Ovary (tissue), 10 donors: ENCODE measurements at regions of chr17 and their contacts with region 1.

Region 1: GRCh38 chr17:77096570-77097214 is 44.1 kb upstream of the SEC14L1 start:
- DNase-seq: peak in 1 of 5 donors; percentile 48
- H3K4me3 ChIP-seq: no peak overlapping the region
- H3K27ac ChIP-seq: peak overlapping the region; percentile 4 to 59
- H3K4me1 ChIP-seq: peaks cover 12% of the 10 kb centered on the region
- H3K27me3 ChIP-seq: no peaks in the 10 kb centered on the region
- CTCF ChIP-seq: peak; percentile 63 to 85 (median 75)
- EP300 ChIP-seq: no peak
- POLR2A ChIP-seq: no peak

Region 2: DNA sequence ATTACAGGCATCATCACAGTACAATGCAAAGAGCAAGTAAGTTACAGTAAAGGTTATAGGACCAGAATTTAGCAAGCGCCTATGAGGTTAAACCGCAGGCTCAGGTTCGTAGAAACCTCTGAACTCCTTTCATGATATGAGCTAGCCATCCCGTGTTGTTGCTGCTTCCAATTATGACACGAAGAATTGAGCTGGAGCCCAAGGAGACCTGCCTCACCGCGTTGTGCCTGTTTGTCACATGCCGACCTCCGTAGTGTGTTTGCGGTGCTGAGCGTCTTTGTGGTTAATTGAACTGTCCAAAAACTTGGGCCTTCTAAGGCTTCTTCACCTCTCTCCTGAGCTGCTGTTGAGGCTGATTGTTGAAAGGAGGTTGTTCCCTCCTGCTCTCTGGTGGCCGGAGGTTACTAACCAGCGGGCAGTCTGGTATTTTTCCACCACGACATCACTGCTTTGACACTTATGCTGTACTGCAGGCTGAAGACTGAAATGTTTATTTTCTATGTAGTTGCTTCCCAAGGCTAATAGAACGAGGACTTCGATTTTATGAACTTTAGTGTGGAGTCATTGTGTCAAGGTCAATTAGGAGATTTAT is 111.6 kb after region 1 on chr17:
- intact Hi-C with region 1: loop called in 2 of 4 experiments (anchors 2 to 5 kb)
- DNase-seq: peak in 3 of 5 donors; percentile 21 to 45 (median 44)
- H3K4me3 ChIP-seq: no peak overlapping the region
- H3K27ac ChIP-seq: no peak overlapping the region
- H3K4me1 ChIP-seq: no peaks in the 10 kb centered on the region
- H3K27me3 ChIP-seq: no peaks in the 10 kb centered on the region
- CTCF ChIP-seq: peak in 1 of 3 donors; percentile 19
- EP300 ChIP-seq: no peak
- POLR2A ChIP-seq: no peak